GM12878 (cell line): ENCODE measurements at regions of chr6 and their contacts with region 1.

Region 1: DNA sequence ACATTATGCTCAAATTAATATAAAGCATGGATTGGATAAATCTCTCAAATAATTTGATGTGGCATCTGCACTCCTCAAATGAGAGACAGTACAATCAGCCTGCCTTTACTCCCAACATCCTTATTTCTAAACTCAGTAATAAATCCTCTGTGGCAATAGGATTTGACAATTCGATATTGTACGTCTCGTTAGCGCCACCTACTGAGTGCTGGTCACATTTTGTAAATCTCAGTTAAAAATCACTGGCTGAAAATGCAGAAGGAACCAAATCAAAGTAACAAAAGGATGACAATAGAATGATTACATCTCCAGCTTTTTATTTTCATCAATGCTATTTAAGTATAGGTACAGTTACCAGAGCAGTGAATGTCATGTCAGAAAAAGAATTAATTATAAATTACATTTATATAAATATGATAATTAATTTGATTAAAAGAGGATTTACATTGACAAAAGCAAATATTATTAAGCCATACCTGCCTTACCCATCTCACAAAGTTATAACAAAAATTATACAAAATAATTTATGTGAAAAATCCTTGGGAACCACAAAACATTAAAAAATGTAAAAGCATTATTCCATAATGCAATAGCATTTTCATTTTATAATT is 20.2 kb upstream of the GJE1 start:
- DNase-seq: peak; percentile 4
- ATAC-seq: peak; percentile 61
- H3K4me3 ChIP-seq: no peak overlapping the region
- H3K27ac ChIP-seq: no peak overlapping the region
- H3K4me1 ChIP-seq: no peaks in the 10 kb centered on the region
- H3K27me3 ChIP-seq: no peaks in the 10 kb centered on the region
- CTCF ChIP-seq: peak; percentile 73 to 85 (median 75)
- EP300 ChIP-seq: no peak
- POLR2A ChIP-seq: no peak
- RAD21 ChIP-seq: peak; percentile 86

Region 2: GRCh38 chr6:141677598-141678211 is 434.9 kb before region 1 on chr6:
- CTCF ChIA-PET with region 1: no interaction called
- POLR2A ChIA-PET with region 1: no interaction called
- RAD21 ChIA-PET with region 1: interaction called, 6 read pairs
- SMC1A ChIA-PET with region 1: no interaction called
- in situ Hi-C with region 1: loop called (anchors 10 kb)
- intact Hi-C with region 1: loop called (anchors 2 kb)
- DNase-seq: no peak
- ATAC-seq: peak; percentile 66
- H3K4me3 ChIP-seq: no peak overlapping the region
- H3K27ac ChIP-seq: no peak overlapping the region
- H3K4me1 ChIP-seq: no peaks in the 10 kb centered on the region
- H3K27me3 ChIP-seq: no peaks in the 10 kb centered on the region
- CTCF ChIP-seq: peak; percentile 45 to 56 (median 50)
- EP300 ChIP-seq: no peak
- POLR2A ChIP-seq: no peak
- RAD21 ChIP-seq: peak; percentile 49